Sigmoid colon (tissue), 7 donors: ENCODE measurements at regions of chr11 and their contacts with region 1.

Region 1: DNA sequence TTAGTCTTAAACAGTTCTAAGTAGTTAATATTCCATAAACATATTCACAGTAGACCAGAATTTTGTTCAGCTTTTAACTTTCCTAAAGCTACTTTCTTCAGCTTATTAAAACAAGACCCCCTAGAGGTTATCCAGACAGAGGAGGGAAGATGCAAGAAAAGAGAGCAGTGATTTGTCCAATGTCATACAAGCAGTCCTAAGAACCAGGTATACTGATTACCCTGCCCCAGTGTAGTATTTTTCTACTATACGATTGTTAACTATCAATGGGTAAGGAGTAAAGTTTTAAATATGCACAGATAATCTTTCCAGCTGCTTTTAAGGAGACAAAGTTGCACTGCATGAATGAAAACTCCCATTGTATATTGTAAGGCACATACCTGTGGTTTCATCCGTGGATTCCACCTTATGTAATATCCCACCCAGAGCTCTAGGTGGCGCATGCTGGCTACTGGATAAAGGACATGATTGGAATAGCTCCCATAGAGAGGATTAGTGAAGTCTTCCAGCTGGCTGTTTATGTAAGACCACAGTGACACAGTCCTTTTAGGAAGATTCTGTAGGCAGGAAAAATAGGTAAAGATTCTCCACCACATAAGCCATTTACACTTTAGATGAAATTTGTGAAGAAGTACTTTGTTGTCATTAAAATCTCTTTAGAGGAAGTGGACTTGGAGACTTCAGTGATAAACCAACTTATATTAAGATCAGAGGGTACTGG is 45.6 kb downstream of the CEP57 start:
- DNase-seq: peak; percentile 80
- H3K4me3 ChIP-seq: no peak overlapping the region
- H3K27ac ChIP-seq: peak overlapping the region in 2 of 4 donors; percentile 33 to 35
- H3K4me1 ChIP-seq: peaks cover 0 to 8% (median 0%) of the 10 kb centered on the region in 4 donors
- H3K27me3 ChIP-seq: no peaks in the 10 kb centered on the region
- CTCF ChIP-seq: peak; percentile 62 to 81 (median 79)
- EP300 ChIP-seq: no peak
- POLR2A ChIP-seq: no peak

Region 2: DNA sequence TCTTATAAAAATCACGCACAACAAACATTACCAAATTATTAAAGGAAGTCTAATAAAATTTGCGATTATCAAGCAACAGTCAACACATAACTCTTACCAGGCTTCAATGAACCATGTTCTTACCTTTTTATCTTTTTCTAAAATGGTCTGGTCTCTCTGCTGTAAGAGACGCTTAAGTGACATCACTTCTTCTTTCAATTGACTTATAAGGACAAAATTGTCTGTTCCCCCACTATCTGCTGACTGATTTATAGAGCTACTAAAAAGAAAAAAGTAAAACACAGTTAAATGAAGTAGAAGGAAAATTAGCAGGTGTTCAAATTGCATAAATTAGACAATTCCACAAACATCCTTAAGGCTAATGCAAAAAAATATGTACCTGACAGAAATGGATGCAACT is 57.2 kb before region 1 on chr11:
- intact Hi-C with region 1: no loop called
- DNase-seq: no peak
- H3K4me3 ChIP-seq: no peak overlapping the region
- H3K27ac ChIP-seq: no peak overlapping the region
- H3K4me1 ChIP-seq: no peaks in the 10 kb centered on the region
- H3K27me3 ChIP-seq: no peaks in the 10 kb centered on the region
- CTCF ChIP-seq: no peak
- EP300 ChIP-seq: no peak
- POLR2A ChIP-seq: no peak

Region 3: GRCh38 chr11:96215110-96215782 is 379.3 kb after region 1 on chr11:
- intact Hi-C with region 1: no loop called
- DNase-seq: no peak
- H3K4me3 ChIP-seq: no peak overlapping the region
- H3K27ac ChIP-seq: peak overlapping the region; percentile 61 to 71 (median 68)
- H3K4me1 ChIP-seq: peaks cover 0 to 39% (median 35%) of the 10 kb centered on the region in 4 donors
- H3K27me3 ChIP-seq: no peaks in the 10 kb centered on the region
- CTCF ChIP-seq: no peak
- EP300 ChIP-seq: no peak
- POLR2A ChIP-seq: no peak

Region 4: DNA sequence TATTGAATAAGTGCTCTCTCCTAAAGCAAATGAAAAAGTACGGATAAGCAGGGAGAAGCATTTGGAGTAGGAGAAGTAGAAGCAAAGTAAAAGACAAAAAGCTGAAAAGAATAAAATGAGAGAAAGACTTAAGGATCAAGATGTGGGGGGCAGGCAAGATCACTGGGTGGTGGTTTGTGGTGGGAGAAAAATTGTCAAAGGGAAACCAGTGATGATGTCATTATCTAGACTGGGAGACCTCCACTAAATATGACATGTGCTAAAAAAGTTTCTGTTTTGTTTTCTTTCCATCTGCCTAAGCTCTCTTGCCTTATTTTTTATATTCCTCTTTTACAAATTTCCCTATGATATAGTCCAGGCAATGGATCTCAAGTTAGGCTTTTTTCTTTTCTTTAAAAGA is 521.9 kb after region 1 on chr11:
- intact Hi-C with region 1: no loop called
- DNase-seq: no peak
- H3K4me3 ChIP-seq: no peak overlapping the region
- H3K27ac ChIP-seq: no peak overlapping the region
- H3K4me1 ChIP-seq: no peaks in the 10 kb centered on the region
- H3K27me3 ChIP-seq: no peaks in the 10 kb centered on the region
- CTCF ChIP-seq: no peak
- EP300 ChIP-seq: no peak
- POLR2A ChIP-seq: no peak

Region 5: DNA sequence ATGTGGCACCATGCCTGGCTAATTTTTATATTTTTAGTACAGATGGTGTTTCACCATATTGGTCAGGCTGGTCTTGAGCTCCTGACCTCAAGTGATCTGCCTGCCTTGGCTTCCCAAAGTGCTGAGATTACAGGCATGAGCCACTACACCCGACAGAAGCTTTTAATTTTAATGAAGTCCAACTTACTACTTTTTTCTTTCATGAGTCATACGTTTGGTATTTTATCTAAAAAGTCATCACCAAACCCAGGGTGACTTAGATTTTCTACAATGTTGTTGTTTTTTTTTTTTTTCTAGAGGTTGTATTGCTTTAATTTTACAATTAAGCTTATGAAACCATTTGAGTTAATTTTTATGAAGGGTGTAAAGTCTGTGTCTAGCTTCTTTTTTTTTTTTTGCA is 588.8 kb after region 1 on chr11:
- intact Hi-C with region 1: loop called (anchors 2 kb)
- DNase-seq: no peak
- H3K4me3 ChIP-seq: no peak overlapping the region
- H3K27ac ChIP-seq: no peak overlapping the region
- H3K4me1 ChIP-seq: no peaks in the 10 kb centered on the region
- H3K27me3 ChIP-seq: no peaks in the 10 kb centered on the region
- CTCF ChIP-seq: no peak
- EP300 ChIP-seq: no peak
- POLR2A ChIP-seq: no peak